SK-N-SH (cell line): ENCODE measurements at regions of chr21 and their contacts with region 1.

Region 1: DNA sequence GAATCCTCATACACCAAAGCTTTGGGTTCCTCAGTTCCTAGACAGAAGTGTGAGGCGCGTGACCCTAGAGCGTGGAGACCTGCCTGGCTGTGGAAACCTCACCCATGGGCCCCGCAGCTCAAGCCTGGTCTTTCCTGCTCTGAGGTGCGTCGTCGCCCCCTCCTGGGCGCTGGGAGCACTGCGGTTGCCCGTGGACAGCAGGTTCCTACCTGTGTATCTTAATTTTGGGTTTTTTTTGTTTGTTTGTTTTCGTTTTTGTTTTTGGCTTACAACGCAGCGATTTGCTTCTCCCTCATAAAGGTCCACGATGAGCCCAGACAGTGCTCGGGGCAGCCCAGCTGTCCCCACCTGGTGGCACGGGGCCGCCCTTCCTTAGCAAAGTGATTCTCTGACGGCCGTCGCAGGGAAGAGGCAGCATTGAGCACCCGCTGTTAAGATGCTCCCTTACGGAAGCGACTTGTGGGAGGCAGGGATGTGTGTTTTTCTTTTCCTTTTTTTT is 36.6 kb upstream of the TRAPPC10 start:
- DNase-seq: peak; percentile 91
- H3K4me3 ChIP-seq: no peak overlapping the region; a peak in 1 of 4 replicates
- H3K27ac ChIP-seq: no peak overlapping the region
- H3K4me1 ChIP-seq: no peaks in the 10 kb centered on the region; a peak in 1 of 4 replicates
- H3K27me3 ChIP-seq: no peaks in the 10 kb centered on the region
- CTCF ChIP-seq: peak; percentile 93
- EP300 ChIP-seq: no peak
- RAD21 ChIP-seq: peak; percentile 86

Region 2: GRCh38 chr21:43824333-43825241 is 151.0 kb before region 1 on chr21:
- CTCF ChIA-PET with region 1: interaction called, 10 read pairs
- POLR2A ChIA-PET with region 1: no interaction called
- DNase-seq: peak; percentile 9
- H3K4me3 ChIP-seq: no peak overlapping the region
- H3K27ac ChIP-seq: no peak overlapping the region
- H3K4me1 ChIP-seq: peaks cover 0 to 5% of the 10 kb centered on the region in 2 experiments; a peak in 1 of 4 replicates
- H3K27me3 ChIP-seq: no peaks in the 10 kb centered on the region
- CTCF ChIP-seq: no peak
- EP300 ChIP-seq: no peak
- RAD21 ChIP-seq: no peak

Region 3: DNA sequence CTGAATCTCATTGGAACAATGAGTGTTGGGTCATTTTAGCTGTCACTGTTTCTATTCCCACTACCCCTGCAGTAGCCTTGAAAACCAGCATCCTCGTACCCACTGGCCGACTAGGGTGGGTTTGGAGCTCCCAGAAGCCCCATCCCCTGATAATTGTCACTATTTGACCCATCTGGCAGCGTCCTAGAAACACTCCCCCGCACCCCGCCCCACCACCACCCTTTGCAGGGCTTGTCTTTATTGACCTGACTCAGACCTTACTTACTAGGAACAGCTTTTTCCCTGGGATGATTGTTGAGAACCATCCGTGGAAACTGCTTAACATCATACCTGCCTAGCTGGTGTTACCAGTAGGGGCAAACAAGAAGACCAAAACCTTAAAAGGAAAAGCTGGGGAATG is 138.9 kb before region 1 on chr21:
- CTCF ChIA-PET with region 1: interaction called, 12 read pairs
- POLR2A ChIA-PET with region 1: no interaction called
- DNase-seq: peak; percentile 7
- H3K4me3 ChIP-seq: no peak overlapping the region
- H3K27ac ChIP-seq: no peak overlapping the region
- H3K4me1 ChIP-seq: no peaks in the 10 kb centered on the region
- H3K27me3 ChIP-seq: peaks cover 11% of the 10 kb centered on the region; the same call in 1 of the 2 replicates
- CTCF ChIP-seq: no peak
- EP300 ChIP-seq: no peak
- RAD21 ChIP-seq: no peak

Region 4: GRCh38 chr21:43938751-43939442 is 36.6 kb before region 1 on chr21:
- CTCF ChIA-PET with region 1: interaction called, 12 read pairs
- POLR2A ChIA-PET with region 1: no interaction called
- DNase-seq: peak; percentile 90
- H3K4me3 ChIP-seq: peak overlapping the region in 1 of 2 experiments; percentile 37; a peak in 1 of 4 replicates
- H3K27ac ChIP-seq: no peak overlapping the region
- H3K4me1 ChIP-seq: no peaks in the 10 kb centered on the region; a peak in 1 of 4 replicates
- H3K27me3 ChIP-seq: no peaks in the 10 kb centered on the region
- CTCF ChIP-seq: peak; percentile 81
- EP300 ChIP-seq: no peak
- RAD21 ChIP-seq: peak; percentile 57